ENCODE measurements at regions of chr7 and their contacts with region 1.

Region 1: DNA sequence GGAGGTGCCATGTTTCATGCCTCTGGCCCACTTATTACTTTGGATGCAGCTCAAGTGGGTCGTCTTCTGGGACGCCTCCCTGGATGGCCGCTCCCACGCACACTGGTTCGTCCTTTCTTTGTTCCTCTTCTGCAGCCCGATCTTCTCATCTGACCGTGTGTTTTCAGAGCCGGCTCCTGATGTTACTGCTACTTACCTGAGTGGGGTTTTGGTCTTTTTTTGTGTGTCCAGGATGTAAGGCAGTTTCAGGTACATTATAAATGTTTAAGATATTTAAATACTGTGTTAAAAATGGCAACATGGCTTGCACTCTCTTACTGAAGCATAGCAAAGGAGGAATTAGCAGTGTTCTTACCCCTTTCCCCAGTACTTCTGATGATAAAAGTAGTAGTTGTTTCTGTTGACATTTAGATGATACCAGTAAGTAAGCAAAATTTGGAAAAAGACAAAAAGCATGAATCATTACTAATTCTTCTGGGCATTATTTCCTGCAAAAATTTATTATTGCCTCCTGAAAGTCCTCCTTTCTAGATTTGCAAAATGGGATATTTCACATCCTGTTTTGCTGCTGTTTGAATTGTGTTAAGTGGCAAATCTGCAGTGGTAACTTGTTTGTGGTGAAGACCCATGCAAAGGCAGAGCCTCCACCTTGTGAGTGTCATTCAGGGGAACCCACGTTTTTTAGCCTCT is 59.4 kb downstream of the SHH start:
- DNase-seq: no peak
- H3K4me3 ChIP-seq: no peak overlapping the region
- H3K27ac ChIP-seq: no peak overlapping the region
- H3K27me3 ChIP-seq: no peaks in the 10 kb centered on the region
- CTCF ChIP-seq: no peak

Region 2: GRCh38 chr7:155694851-155695250 is 58.0 kb before region 1 on chr7:
- CTCF ChIA-PET with region 1: no interaction called
- POLR2A ChIA-PET with region 1: no interaction called
- DNase-seq: no peak
- H3K4me3 ChIP-seq: no peak overlapping the region
- H3K27ac ChIP-seq: no peak overlapping the region
- H3K27me3 ChIP-seq: no peaks in the 10 kb centered on the region
- CTCF ChIP-seq: no peak

Region 3: DNA sequence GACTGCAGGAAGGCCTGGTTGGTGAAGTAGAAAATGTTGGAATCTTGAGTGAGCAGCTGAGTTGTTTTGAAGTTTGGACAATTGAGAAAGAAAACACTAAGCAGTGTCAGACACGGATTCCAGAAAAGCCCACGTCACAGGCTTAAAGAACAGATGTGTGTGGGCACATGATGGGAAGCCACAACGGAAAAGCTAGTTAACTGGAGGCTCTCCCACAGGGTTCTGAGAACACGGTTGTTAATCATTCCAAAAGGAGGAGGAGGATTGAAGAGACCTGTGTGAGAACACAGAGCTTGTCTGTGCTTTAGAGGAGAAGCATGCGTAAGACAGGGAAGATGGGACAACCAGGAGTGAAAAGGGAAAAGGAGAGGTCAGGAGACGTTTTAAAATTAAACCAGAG is 16.8 kb after region 1 on chr7:
- CTCF ChIA-PET with region 1: interaction called, 14 read pairs
- POLR2A ChIA-PET with region 1: no interaction called
- DNase-seq: no peak
- H3K4me3 ChIP-seq: no peak overlapping the region
- H3K27ac ChIP-seq: no peak overlapping the region
- H3K27me3 ChIP-seq: no peaks in the 10 kb centered on the region
- CTCF ChIP-seq: no peak

Region 4: GRCh38 chr7:155860840-155861479 is 108.1 kb after region 1 on chr7:
- CTCF ChIA-PET with region 1: no interaction called
- POLR2A ChIA-PET with region 1: no interaction called
- DNase-seq: peak; percentile 36
- H3K4me3 ChIP-seq: no peak overlapping the region
- H3K27ac ChIP-seq: peak overlapping the region; percentile 39
- H3K27me3 ChIP-seq: peaks cover 2% of the 10 kb centered on the region
- CTCF ChIP-seq: no peak

Region 5: DNA sequence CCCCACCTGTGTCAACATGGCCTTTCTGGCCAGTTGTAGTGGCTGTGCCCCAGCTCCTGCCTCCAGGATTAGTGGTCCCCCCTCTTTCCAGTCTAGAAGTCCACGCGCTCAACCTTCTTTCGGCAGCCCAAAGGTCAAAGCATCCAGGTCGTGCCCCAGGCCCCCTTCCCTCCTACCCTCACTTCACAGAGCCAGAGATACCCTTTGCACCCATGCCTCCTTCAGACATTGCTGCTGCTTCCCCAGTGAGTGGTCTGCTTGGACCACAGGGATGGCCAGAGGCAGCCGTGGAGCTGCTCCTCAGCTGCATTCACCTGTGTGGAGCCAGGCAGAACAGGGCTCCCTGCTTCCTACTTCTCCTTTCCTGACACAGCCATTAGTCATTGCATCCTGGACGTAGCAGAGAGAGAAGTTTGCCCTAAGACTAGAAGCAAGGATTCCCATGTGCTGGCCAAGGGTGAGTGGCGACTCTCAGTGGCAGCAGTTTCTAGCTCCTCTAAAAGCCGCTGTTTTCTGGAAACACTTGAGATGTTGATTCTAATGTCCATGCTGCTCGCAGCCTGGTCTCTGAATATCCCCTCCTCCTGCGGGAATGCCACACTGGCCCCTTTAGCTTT is 302.4 kb after region 1 on chr7:
- CTCF ChIA-PET with region 1: no interaction called
- POLR2A ChIA-PET with region 1: no interaction called
- DNase-seq: no peak
- H3K4me3 ChIP-seq: no peak overlapping the region
- H3K27ac ChIP-seq: no peak overlapping the region
- H3K27me3 ChIP-seq: no peaks in the 10 kb centered on the region
- CTCF ChIP-seq: no peak

Measured in AG04450 (cell line).